A673 (cell line): ENCODE measurements at regions of chr16 and their contacts with region 1.

Region 1: DNA sequence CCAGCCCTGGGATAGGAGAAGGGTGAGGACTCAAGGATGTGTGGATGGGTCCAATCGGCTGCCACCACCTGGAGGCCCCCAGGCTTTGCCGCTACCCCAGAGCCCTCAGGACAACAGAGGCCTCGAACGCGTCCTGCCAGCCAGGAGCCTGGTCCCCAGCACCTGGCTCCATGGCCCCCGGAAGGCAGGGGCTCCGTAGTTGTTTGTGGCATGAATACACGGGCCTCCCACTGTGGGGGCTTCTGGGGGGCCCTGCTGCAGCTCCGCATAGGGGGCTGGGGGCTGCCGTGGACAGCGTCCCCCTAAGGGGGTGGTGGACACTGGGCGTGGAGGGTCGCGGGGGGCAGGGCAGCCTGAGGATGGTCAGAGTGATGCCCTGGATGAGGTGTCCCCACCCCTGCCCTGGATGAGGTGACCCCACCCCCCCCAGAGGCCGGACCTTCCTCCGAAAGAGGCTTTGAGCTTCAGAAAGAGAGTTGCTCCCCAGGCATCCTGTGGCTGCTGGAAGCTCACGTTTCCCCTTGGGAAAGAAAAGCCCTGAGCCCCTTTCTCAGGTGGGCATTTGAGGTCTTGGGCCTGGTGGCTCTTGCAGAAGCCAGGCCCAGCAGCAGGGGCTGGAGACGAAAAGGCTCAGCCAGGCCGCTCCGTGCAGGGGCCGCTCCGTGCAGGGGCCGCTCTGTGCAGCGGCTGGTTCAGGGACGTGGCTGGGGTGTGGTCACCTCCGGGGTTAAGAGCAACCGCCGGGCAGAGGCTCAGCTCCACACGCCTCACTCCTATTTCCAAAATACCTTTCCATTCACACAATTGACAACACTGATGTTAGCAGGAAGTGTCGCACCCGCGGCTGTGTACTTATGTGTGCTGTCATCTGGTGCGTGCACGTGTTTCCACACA is 40.3 kb upstream of the GNG13 start:
- DNase-seq: no peak
- H3K4me3 ChIP-seq: no peak overlapping the region
- H3K27ac ChIP-seq: no peak overlapping the region
- H3K4me1 ChIP-seq: peaks cover 14% of the 10 kb centered on the region
- H3K27me3 ChIP-seq: no peaks in the 10 kb centered on the region
- CTCF ChIP-seq: no peak

Region 2: DNA sequence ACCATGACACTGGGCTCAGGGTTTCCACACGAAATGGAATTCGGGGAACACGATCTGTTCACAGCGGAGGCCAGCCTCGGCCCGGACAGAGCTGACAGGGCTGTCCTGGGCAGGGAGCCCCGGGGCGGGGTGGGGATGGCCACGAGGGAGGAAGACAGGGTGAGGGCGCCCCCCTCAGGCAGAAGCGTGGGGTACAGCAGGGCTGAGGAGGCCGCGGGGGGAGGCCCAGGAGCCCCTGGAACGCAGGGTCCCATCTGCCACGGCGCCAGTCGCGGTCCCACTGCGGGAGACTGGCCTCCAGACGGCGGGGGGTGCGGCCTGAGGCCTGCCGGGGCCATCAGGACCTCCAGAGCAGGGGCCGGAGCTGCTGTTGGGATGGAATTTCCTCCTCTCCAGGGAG is 54.0 kb after region 1 on chr16:
- CTCF ChIA-PET with region 1: no interaction called
- POLR2A ChIA-PET with region 1: no interaction called
- intact Hi-C with region 1: no loop called
- DNase-seq: no peak
- H3K4me3 ChIP-seq: no peak overlapping the region
- H3K27ac ChIP-seq: no peak overlapping the region
- H3K4me1 ChIP-seq: peaks cover 7% of the 10 kb centered on the region
- H3K27me3 ChIP-seq: no peaks in the 10 kb centered on the region
- CTCF ChIP-seq: peak; percentile 47; the same call in 1 of the 2 replicates

Region 3: DNA sequence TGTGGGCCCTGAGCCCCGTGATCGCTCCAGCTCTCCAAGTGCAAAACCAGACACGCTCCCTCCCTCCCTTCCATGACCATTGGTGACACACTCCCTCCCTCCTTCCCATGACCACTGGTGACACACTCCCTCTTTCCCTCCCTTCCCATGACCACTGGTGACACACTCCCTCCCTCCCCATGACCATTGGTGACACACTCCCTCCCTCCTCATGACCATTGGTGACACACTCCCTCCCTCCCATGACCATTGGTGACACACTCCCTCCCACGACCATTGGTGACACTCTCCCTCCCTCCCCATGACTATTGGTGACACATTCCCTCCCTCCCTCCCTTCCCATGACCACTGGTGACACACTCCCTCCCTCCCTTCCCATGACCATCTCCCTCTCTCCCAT is 73.6 kb after region 1 on chr16:
- CTCF ChIA-PET with region 1: no interaction called
- POLR2A ChIA-PET with region 1: no interaction called
- intact Hi-C with region 1: no loop called
- DNase-seq: peak; percentile 24
- H3K4me3 ChIP-seq: no peak overlapping the region
- H3K27ac ChIP-seq: no peak overlapping the region
- H3K4me1 ChIP-seq: no peaks in the 10 kb centered on the region
- H3K27me3 ChIP-seq: no peaks in the 10 kb centered on the region
- CTCF ChIP-seq: no peak

Region 4: GRCh38 chr16:1244881-1245280 is 404.1 kb after region 1 on chr16:
- CTCF ChIA-PET with region 1: interaction called, 13 read pairs
- POLR2A ChIA-PET with region 1: no interaction called
- intact Hi-C with region 1: no loop called
- DNase-seq: no peak
- H3K4me3 ChIP-seq: no peak overlapping the region
- H3K27ac ChIP-seq: peak overlapping the region; percentile 90
- H3K4me1 ChIP-seq: peaks cover 26% of the 10 kb centered on the region
- H3K27me3 ChIP-seq: no peaks in the 10 kb centered on the region
- CTCF ChIP-seq: no peak